ENCODE measurements at regions of chr5 and their contacts with region 1.

Region 1: GRCh38 chr5:79488775-79489174 is 25.2 kb downstream of the HOMER1 start:
- DNase-seq: no peak
- H3K4me3 Mint-ChIP-seq: no peak overlapping the region
- H3K27ac Mint-ChIP-seq: no peak overlapping the region
- H3K4me1 Mint-ChIP-seq: no peaks in the 10 kb centered on the region
- H3K27me3 Mint-ChIP-seq: no peaks in the 10 kb centered on the region

Region 2: GRCh38 chr5:79193640-79194039 is 295.1 kb before region 1 on chr5:
- CTCF ChIA-PET with region 1: no interaction called
- POLR2A ChIA-PET with region 1: no interaction called
- DNase-seq: no peak
- H3K4me3 Mint-ChIP-seq: no peak overlapping the region
- H3K27ac Mint-ChIP-seq: no peak overlapping the region
- H3K4me1 Mint-ChIP-seq: no peaks in the 10 kb centered on the region
- H3K27me3 Mint-ChIP-seq: no peaks in the 10 kb centered on the region

Region 3: DNA sequence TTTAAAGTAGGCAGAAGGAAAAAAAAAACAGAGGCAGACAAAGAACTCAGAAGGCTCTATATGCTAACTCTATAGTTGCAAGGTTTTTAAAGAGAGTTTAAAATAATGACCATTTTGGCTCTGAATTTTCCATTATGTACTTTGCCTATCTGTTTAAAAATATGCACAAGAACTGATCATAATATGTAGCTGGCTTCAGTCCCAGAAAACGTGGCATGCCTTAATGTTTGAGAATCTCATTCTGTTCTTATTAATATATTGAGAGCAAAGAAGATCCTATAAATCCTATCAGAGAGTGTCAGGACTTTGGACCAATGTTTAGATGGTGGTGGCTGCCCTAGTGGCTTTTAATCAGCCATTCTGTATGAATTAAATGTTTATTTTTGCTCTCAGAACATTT is 131.4 kb before region 1 on chr5:
- CTCF ChIA-PET with region 1: no interaction called
- POLR2A ChIA-PET with region 1: no interaction called
- DNase-seq: no peak
- H3K4me3 Mint-ChIP-seq: no peak overlapping the region
- H3K27ac Mint-ChIP-seq: no peak overlapping the region
- H3K4me1 Mint-ChIP-seq: no peaks in the 10 kb centered on the region
- H3K27me3 Mint-ChIP-seq: peaks cover 6% of the 10 kb centered on the region

Region 4: DNA sequence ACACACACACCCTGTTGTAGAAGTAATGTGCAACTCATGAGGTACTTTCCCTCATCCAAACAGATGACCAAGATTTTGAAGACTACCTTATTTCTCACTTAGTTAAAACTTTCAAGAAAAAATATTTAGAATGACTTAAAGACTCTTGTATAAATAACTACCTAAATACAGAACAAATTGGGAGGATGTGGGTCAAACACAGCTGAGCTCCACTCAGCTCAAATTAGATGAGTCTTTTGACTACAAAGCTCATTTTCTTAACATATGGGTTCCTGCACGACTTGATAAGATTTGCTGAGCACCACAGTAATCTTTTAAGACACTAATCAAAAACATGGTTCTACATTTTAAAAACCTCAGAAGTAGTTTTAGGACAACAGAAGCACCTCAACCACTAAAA is 493.4 kb after region 1 on chr5:
- CTCF ChIA-PET with region 1: no interaction called
- POLR2A ChIA-PET with region 1: interaction called, 16 read pairs
- DNase-seq: no peak
- H3K4me3 Mint-ChIP-seq: no peak overlapping the region
- H3K27ac Mint-ChIP-seq: no peak overlapping the region
- H3K4me1 Mint-ChIP-seq: peaks cover 46% of the 10 kb centered on the region
- H3K27me3 Mint-ChIP-seq: no peaks in the 10 kb centered on the region